ENCODE measurements at regions of chr2 and their contacts with region 1.

Region 1: DNA sequence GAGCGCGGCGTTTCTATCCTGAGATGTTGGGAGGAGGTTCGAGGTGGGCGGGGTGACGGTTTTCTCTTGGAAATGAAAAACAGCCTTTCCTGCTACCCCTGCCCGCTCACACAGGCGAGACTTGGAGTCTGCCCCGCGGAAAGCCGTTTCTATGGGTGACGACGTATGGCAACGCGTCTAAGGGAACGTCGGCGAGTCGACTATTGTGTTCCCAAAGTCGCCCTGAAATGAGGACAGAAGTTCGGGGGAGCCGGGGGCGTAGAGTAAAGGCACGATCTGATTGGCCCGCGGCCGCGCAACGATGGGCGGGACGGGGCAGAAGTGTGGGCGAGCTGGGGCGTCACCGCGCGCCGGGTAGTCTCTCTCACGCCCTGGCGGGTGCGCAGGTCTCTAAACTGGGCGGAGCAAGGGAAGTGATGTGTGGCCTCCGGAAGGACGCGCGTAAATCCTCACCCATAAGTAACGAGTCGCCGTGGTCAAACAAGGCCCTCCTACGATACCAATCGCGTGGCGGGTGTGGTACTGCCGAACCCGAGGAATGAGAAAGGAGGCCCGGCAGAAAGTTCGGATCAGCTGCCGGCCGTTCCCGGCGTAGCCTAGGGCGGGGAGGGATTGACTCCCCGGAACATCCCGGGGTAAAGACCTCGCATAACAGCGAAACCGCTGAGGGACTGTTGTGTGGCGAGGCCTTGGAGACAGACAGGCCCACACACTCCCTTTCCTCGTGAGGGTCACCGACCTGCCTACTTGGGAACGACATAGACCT is 89.6 kb downstream of the FAM161A start:
- DNase-seq: peak; percentile 99
- H3K4me3 ChIP-seq: peak overlapping the region; percentile 65 to 75 (median 67)
- H3K27ac ChIP-seq: peak overlapping the region; percentile 99
- H3K4me1 ChIP-seq: peaks cover 8% of the 10 kb centered on the region
- H3K27me3 ChIP-seq: no peaks in the 10 kb centered on the region
- CTCF ChIP-seq: no peak

Region 2: DNA sequence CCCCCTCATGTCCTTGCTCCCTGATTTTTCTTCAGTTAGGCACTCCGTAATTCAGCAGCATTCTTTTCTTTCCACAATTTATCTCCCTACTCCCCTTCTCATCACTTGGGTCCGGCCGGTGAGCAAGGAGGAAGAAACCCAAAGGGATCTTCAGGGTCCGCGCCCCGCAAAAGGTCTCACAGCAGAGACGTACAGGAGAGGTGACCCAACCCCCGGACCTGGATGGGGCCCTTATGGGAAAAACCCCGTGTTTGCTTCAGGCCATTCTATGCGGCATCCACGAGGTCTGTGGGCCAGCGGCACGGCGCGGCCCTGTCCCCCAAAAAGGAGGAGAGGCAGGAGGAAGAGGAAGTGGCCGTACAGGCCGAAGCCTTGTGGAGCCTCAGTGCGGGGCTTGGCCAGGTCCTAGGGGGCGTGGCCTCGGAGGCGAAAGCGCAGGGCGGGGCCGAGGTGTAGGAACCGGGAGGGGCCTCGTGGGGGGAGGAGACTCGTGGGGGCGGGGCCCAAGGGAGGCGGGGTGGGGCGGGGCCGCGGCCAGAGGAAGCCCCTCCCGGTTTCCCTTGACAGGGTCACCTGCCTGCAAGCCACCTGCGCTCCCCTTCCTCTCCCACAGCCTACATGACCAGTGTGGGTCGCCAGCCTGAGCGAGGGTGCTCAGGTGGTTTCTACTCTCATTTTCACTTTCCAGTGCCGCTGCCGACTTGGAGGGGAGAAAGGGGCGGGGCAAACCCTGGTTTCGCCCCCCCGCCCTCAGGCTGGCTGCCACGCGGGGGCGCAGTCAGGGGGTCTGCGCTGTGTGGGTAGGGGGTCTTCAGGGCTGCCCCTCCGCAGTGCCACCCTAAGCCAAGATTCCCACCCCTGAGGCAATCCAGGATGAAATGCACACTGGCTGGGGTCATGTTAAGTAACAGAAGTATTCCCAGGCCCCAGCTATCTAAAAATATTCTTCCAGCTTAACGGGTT is 69.6 kb before region 1 on chr2:
- CTCF ChIA-PET with region 1: no interaction called
- dilution Hi-C with region 1: no loop called
- in situ Hi-C with region 1: no loop called
- intact Hi-C with region 1: loop called (anchors 5 kb)
- DNase-seq: peak; percentile 78
- H3K4me3 ChIP-seq: peak overlapping the region; percentile 64 to 93 (median 72)
- H3K27ac ChIP-seq: peak overlapping the region; percentile 3
- H3K4me1 ChIP-seq: peaks cover 6% of the 10 kb centered on the region
- H3K27me3 ChIP-seq: peaks cover 2% of the 10 kb centered on the region
- CTCF ChIP-seq: peak; percentile 20 to 60

Region 3: GRCh38 chr2:61727746-61728145 is 36.5 kb before region 1 on chr2:
- CTCF ChIA-PET with region 1: no interaction called
- dilution Hi-C with region 1: no loop called
- in situ Hi-C with region 1: no loop called
- intact Hi-C with region 1: no loop called
- DNase-seq: no peak
- H3K4me3 ChIP-seq: no peak overlapping the region
- H3K27ac ChIP-seq: no peak overlapping the region
- H3K4me1 ChIP-seq: no peaks in the 10 kb centered on the region
- H3K27me3 ChIP-seq: no peaks in the 10 kb centered on the region
- CTCF ChIP-seq: no peak

Region 4: DNA sequence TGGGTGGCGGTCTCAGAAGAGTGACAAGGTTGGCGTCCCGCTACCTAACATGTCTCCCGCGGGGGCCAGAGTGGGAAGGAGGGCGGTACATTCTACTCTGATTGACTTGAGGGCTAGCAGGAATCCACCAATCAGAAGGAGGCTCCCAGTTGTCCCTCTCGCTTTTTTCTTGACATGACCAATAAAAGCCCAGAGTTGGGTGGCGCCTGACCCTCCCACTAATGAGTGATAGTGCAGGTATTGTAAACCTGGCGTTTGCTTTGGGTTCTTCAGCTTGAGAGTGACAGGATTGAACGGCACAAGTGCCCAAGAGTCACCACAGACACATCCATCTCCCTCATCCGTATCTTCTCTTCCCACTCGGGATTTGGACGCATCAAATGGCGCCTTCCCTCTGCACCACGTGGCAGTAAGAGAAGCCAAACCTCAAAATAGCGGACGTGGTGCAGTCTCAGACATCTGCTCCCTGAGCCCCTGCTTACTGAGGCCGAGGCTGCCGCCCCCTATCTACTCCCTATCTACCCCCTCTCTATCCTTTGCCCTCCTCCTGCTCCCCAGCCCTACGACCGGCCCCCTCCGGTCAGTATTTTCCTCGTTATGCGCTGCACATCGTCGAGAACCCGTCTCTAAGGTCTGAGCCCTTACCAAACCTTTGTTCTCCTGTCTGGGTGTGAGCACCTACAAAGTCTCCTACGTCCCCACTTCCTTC is 90.4 kb after region 1 on chr2:
- CTCF ChIA-PET with region 1: no interaction called
- dilution Hi-C with region 1: no loop called
- in situ Hi-C with region 1: no loop called
- intact Hi-C with region 1: loop called (anchors 2 kb)
- DNase-seq: peak; percentile 95
- H3K4me3 ChIP-seq: peak overlapping the region; percentile 76 to 82 (median 76)
- H3K27ac ChIP-seq: peak overlapping the region; percentile 79
- H3K4me1 ChIP-seq: peaks cover 8% of the 10 kb centered on the region
- H3K27me3 ChIP-seq: no peaks in the 10 kb centered on the region
- CTCF ChIP-seq: peak in 1 of 2 donors; percentile 3